Ascending aorta (tissue), 2 donors: ENCODE measurements at regions of chr12 and their contacts with region 1.

Region 1: DNA sequence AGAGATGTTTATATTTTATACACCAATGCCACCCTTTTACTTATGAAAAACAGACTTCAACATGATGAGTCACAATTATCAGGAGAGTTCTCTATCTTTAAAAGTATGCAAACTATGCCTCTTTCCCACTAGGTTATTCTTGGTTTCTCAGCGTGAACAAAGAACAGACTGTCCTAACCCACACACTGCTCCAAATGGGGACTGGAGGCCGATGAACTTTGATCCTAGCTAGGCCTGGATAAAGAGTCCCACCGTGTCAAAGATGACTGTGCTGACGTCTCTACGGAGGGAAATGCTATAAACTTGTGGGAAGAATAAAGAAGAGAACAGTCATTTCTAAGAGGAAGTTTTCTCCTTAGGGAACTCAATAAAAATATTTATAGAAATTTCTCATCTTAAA is 160.1 kb downstream of the EPS8 start:
- DNase-seq: peak; percentile 35 to 94
- H3K4me3 ChIP-seq: peak overlapping the region in 1 of 2 donors; percentile 21
- H3K27ac ChIP-seq: peak overlapping the region; percentile 68 to 95
- H3K4me1 ChIP-seq: peaks cover 12 to 48% of the 10 kb centered on the region in 2 donors
- H3K27me3 ChIP-seq: no peaks in the 10 kb centered on the region
- CTCF ChIP-seq: no peak

Region 2: DNA sequence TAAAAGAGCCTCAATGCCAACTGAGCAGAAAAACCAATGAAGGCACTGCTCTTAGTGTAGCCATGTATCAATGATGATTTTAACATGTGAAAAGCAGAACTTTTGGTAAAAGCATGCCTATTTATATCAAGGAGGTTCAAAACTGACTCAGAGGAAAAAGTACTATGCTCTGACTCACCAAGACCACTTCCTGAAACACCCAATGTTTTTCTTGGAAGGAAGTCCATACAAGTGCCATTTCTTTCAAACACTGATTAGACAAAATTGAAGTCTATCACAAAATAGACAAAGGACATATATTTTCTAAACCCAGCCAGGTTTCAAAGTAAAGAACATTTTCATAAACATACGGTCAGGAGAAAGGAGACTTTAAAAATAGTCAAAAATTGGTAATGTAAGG is 71.5 kb after region 1 on chr12:
- intact Hi-C with region 1: loop called (anchors 2 kb)
- DNase-seq: no peak
- H3K4me3 ChIP-seq: no peak overlapping the region
- H3K27ac ChIP-seq: peak overlapping the region; percentile 87 to 90
- H3K4me1 ChIP-seq: peaks cover 9 to 68% of the 10 kb centered on the region in 2 donors
- H3K27me3 ChIP-seq: no peaks in the 10 kb centered on the region
- CTCF ChIP-seq: no peak

Region 3: DNA sequence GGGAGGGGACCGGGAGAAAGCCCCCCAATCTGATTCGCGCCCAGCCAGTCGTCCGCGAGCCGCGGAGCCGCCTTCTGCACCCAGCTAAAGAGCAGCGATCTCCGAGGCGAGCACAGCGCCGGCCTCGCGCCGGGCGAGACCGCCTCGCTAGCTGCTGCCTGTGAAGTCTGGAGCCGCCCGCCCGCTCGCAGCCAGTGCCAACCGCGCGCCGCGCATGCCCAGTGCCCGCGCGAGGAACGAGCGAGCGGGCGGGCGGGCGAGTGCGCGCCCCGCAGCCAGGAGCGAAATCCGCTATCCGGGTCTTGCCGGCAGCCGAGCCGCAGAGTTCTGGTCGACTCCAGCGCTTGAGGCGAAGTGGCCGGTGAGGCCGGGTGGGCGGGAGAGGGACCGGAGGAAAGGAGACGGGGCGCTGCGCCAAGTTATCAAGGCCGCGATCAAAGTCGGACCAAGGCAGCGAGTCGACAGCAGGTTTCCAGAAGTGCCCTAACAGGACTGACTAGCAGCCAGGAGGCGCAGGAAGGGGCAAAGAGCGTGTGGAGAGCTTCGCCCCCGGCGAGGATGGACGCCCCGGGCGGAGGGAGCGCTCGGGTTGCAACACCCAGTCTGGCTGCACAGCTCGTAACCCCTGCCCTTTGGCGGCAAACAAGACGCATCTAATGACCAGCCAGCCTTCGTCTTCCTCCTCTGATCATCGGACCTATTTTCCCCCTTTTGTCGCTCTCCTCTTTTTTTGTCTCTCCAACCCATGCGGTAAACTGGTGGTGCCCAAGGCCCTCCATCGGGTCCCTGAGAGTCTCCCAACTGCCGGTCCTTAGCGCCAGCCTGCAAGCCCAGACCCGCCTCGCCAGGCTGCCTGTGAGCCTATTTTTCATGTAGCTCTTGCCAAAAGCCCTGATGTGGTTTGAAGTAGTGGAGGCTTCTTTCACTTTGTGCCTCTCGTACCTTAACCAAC is 160.4 kb after region 1 on chr12 and contains the start of gene EPS8:
- intact Hi-C with region 1: loop called (anchors 5 kb)
- DNase-seq: peak; percentile 54 to 96
- H3K4me3 ChIP-seq: peak within 1 kb of the TSS; percentile 74 to 90
- H3K27ac ChIP-seq: peak within 1 kb of the TSS; percentile 88 to 92
- H3K4me1 ChIP-seq: no peaks in the 10 kb centered on the region
- H3K27me3 ChIP-seq: no peaks in the 10 kb centered on the region
- CTCF ChIP-seq: no peak
- total RNA-seq, gene EPS8: 94.6 TPM